T-cell (primary cell): ENCODE measurements at regions of chr3 and their contacts with region 1.

Region 1: DNA sequence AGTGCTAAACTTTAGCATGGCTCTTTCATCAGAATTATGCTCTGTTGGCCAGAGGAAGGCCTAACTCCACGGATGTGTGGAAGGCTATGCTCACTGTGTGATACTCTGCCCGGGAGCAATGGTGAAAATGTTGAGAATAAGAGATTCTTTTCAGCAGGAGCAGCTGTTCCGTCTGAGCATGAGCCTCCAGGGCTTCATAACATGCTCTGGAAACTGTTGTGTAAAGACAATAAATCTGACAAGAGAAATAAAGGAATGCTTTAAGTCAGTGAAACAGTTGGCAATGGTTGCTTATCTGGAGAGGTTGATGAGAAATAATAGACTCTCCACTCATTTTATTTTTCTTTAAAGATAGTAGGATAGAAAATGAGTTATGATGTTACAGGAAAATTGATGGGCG is 269.8 kb downstream of the DIPK2A start:
- DNase-seq: no peak
- ATAC-seq: no peak
- H3K4me3 ChIP-seq: no peak overlapping the region
- H3K4me3 Mint-ChIP-seq: no peak overlapping the region
- H3K27ac ChIP-seq: no peak overlapping the region
- H3K27ac Mint-ChIP-seq: no peak overlapping the region
- H3K4me1 ChIP-seq: no peaks in the 10 kb centered on the region
- H3K4me1 Mint-ChIP-seq: no peaks in the 10 kb centered on the region
- H3K27me3 ChIP-seq: no peaks in the 10 kb centered on the region
- H3K27me3 Mint-ChIP-seq: peaks cover 5 to 10% of the 10 kb centered on the region in 2 donors

Region 2: GRCh38 chr3:144175644-144176425 is 65.6 kb before region 1 on chr3:
- CTCF ChIA-PET with region 1: no interaction called
- POLR2A ChIA-PET with region 1: interaction called in 1 of 2 experiments, 12 read pairs
- DNase-seq: no peak
- ATAC-seq: no peak
- H3K4me3 ChIP-seq: no peak overlapping the region
- H3K4me3 Mint-ChIP-seq: no peak overlapping the region
- H3K27ac ChIP-seq: no peak overlapping the region
- H3K27ac Mint-ChIP-seq: no peak overlapping the region
- H3K4me1 ChIP-seq: no peaks in the 10 kb centered on the region
- H3K4me1 Mint-ChIP-seq: no peaks in the 10 kb centered on the region
- H3K27me3 ChIP-seq: no peaks in the 10 kb centered on the region
- H3K27me3 Mint-ChIP-seq: peaks cover 0 to 4% of the 10 kb centered on the region in 2 donors

Region 3: GRCh38 chr3:144502402-144502801 is 261.0 kb after region 1 on chr3:
- CTCF ChIA-PET with region 1: no interaction called
- POLR2A ChIA-PET with region 1: no interaction called
- DNase-seq: no peak
- ATAC-seq: no peak
- H3K4me3 ChIP-seq: no peak overlapping the region
- H3K4me3 Mint-ChIP-seq: no peak overlapping the region
- H3K27ac ChIP-seq: no peak overlapping the region
- H3K27ac Mint-ChIP-seq: no peak overlapping the region
- H3K4me1 ChIP-seq: no peaks in the 10 kb centered on the region
- H3K4me1 Mint-ChIP-seq: no peaks in the 10 kb centered on the region
- H3K27me3 ChIP-seq: peaks cover 0 to 4% of the 10 kb centered on the region in 2 experiments
- H3K27me3 Mint-ChIP-seq: peaks cover 0 to 2% of the 10 kb centered on the region in 2 donors